ENCODE measurements at regions of chr20 and their contacts with region 1.

Region 1: DNA sequence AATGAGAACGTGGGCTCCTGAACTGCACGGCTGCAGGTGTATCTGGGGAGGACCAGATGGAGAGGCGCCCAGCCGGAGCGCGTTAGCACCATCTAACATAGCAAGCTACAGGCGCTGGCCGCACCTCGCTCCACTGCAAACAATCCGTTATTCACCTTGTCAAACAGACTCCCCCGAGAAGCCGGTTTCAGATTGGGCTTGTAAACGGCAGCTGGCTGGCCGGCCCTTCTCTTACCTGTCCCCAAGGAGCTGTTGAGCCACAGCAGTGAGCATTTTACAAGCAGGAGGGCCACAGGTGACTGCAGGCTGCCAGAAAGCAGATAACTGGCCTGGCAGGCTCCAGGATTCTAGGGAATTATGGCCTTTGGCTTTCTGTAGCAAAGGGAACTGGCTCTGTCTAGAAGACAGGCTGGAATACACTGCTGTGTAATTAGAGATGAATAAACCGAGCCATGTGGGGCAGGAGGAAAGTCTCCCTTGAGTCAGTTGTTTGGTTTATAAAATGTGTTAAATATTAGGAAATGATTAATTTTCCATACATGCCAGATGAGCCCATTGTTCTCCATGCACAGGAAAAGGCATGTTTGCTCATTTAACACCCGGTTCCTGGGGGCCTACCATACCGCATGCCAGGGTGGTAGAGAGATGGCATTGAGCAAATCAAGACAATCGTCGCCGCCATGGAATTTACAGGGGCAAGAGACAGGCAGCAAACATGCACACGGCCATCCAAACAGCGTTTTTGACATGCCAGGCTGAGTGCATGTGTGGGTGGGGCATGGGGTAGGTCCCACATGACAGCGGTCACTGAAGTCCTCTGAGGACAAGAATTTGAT is 159.3 kb downstream of the NFATC2 start:
- DNase-seq: peak; percentile 57 to 75 (median 68)
- ATAC-seq: peak; percentile 87
- H3K4me3 ChIP-seq: no peak overlapping the region
- H3K4me1 ChIP-seq: peaks cover 2% of the 10 kb centered on the region
- CTCF ChIP-seq: no peak

Region 2: GRCh38 chr20:51595058-51595532 is 211.9 kb after region 1 on chr20:
- intact Hi-C with region 1: loop called in 1 of 2 experiments (anchors 5 kb)
- DNase-seq: peak; percentile 83 to 89 (median 86)
- ATAC-seq: peak; percentile 97
- H3K4me3 ChIP-seq: no peak overlapping the region
- H3K4me1 ChIP-seq: peaks cover 5% of the 10 kb centered on the region
- CTCF ChIP-seq: peak; percentile 60

Measured in mucosa of descending colon (tissue), 3 donors.